Posterior cingulate gyrus (tissue), 11 donors: ENCODE measurements at regions of chr21 and their contacts with region 1.

Region 1: GRCh38 chr21:32834916-32835235 is 63.3 kb upstream of the PAXBP1 start:
- DNase-seq: peak in 5 of 10 donors; percentile 7 to 79 (median 19)

Region 2: GRCh38 chr21:32587120-32587519 is 247.8 kb before region 1 on chr21:
- intact Hi-C with region 1: no loop called
- DNase-seq: no peak

Region 3: GRCh38 chr21:32770871-32771523 is 63.9 kb before region 1 on chr21:
- intact Hi-C with region 1: no loop called
- DNase-seq: peak in 8 of 10 donors; percentile 18 to 84 (median 35)

Region 4: DNA sequence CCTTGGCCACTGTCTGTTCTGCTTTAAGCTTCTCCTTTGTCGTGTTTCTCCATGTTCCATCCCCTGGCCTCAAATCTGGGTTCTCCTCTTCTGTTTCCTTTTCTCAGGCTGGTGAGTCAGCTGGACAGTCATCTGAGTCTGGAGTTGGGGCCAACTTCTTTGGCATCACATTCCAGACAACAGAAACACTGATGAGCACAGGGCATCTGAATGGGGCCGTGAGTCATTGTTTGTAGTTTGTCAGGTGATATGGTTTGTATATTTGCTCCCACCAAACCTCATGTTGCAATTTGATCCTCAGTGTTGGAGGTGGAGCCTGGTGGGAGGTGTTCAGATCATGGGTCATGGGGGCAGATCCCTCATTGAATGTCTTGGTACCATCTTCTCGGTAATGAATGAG is 176.6 kb after region 1 on chr21:
- intact Hi-C with region 1: loop called (anchors 10 kb)
- DNase-seq: no peak

Region 5: DNA sequence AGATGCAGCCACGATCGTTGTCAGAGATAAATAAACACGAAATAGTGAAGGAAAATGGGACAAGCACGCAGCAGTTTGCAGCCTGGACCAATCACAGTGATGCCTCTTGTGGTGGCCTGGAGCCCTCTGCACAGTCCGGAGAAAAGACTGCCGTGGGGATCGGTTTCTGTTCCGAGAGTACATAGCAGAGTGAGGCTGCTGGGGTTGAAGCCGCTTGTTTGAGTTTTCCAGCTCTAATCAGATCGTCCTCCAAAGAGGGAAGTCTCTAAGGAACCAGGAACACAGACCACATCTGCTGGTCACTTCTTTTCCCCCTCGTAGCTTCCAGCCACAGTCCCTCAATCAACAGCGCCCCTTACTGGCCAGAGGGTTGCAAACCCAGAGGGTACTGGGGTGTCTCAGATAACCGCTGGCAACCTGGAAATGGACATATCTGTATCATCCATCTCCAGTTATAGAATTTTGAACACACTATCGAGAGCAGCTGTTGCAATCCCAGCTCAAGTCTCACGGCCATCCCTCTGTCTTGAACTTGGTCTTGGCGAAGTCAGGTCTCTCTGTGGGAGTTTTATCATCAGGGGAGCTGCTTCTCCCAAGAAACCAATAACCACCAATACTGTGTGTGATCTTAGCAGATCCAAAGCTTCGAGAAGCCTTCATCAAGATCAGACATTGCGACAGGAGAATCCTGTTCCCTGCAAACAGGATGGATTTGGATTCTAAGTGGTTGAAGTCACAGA is 292.4 kb after region 1 on chr21:
- intact Hi-C with region 1: loop called (anchors 5 kb)
- DNase-seq: peak; percentile 42 to 97 (median 84)

Region 6: GRCh38 chr21:33441489-33442477 is 606.9 kb after region 1 on chr21:
- intact Hi-C with region 1: loop called (anchors 10 kb)
- DNase-seq: no peak

Region 7: GRCh38 chr21:33608559-33608958 is 773.7 kb after region 1 on chr21:
- intact Hi-C with region 1: loop called (anchors 5 kb)
- DNase-seq: no peak